HCT116 (cell line): ENCODE measurements at regions of chr2 and their contacts with region 1.

Region 1: GRCh38 chr2:20135631-20136050 is 84.2 kb upstream of the LAPTM4A start:
- DNase-seq: peak; percentile 43
- ATAC-seq: peak; percentile 93
- H3K4me3 ChIP-seq: no peak overlapping the region
- H3K27ac ChIP-seq: no peak overlapping the region
- H3K4me1 ChIP-seq: peaks cover 0 to 14% of the 10 kb centered on the region in 2 experiments; a peak in 2 of 4 replicates
- H3K27me3 ChIP-seq: no peaks in the 10 kb centered on the region
- CTCF ChIP-seq: peak; percentile 78 to 85 (median 82)
- POLR2A ChIP-seq: no peak
- RAD21 ChIP-seq: peak; percentile 83

Region 2: GRCh38 chr2:19879120-19879519 is 256.5 kb before region 1 on chr2:
- CTCF ChIA-PET with region 1: no interaction called
- POLR2A ChIA-PET with region 1: no interaction called
- RAD21 ChIA-PET with region 1: no interaction called
- intact Hi-C with region 1: no loop called
- DNase-seq: no peak
- ATAC-seq: no peak
- H3K4me3 ChIP-seq: no peak overlapping the region
- H3K27ac ChIP-seq: no peak overlapping the region
- H3K4me1 ChIP-seq: no peaks in the 10 kb centered on the region
- H3K27me3 ChIP-seq: 0 out of 2 replicates have a peak, but pooled peaks cover 4% of the 10 kb centered on the region
- CTCF ChIP-seq: no peak
- POLR2A ChIP-seq: no peak
- RAD21 ChIP-seq: no peak

Region 3: GRCh38 chr2:20225294-20226151 is 89.9 kb after region 1 on chr2:
- CTCF ChIA-PET with region 1: interaction called, 9 read pairs
- POLR2A ChIA-PET with region 1: interaction called, 4 read pairs
- RAD21 ChIA-PET with region 1: no interaction called
- intact Hi-C with region 1: loop called (anchors 5 kb)
- DNase-seq: peak; percentile 42
- ATAC-seq: peak; percentile 76
- H3K4me3 ChIP-seq: peak overlapping the region; percentile 67 to 69
- H3K27ac ChIP-seq: peak overlapping the region; percentile 59
- H3K4me1 ChIP-seq: peaks cover 21 to 53% of the 10 kb centered on the region in 2 experiments
- H3K27me3 ChIP-seq: no peaks in the 10 kb centered on the region
- CTCF ChIP-seq: peak in 2 of 3 experiments; percentile 55; a peak in 4 of 6 replicates
- POLR2A ChIP-seq: no peak
- RAD21 ChIP-seq: no peak